Aorta (tissue), 5 donors: ENCODE measurements at regions of chr16 and their contacts with region 1.

Region 1: GRCh38 chr16:29915590-29916247 is 10.3 kb downstream of the KCTD13 start:
- DNase-seq: no peak
- ATAC-seq: no peak
- H3K4me3 ChIP-seq: no peak overlapping the region
- H3K27ac ChIP-seq: no peak overlapping the region
- H3K4me1 ChIP-seq: no peaks in the 10 kb centered on the region
- H3K27me3 ChIP-seq: no peaks in the 10 kb centered on the region

Region 2: GRCh38 chr16:29757950-29758466 is 157.7 kb before region 1 on chr16:
- intact Hi-C with region 1: no loop called
- DNase-seq: peak in 1 of 2 donors; percentile 58
- ATAC-seq: peak; percentile 57
- H3K4me3 ChIP-seq: no peak overlapping the region
- H3K27ac ChIP-seq: no peak overlapping the region
- H3K4me1 ChIP-seq: no peaks in the 10 kb centered on the region
- H3K27me3 ChIP-seq: no peaks in the 10 kb centered on the region

Region 3: GRCh38 chr16:29820271-29820701 is 95.4 kb before region 1 on chr16 and contains the start of gene MVP:
- intact Hi-C with region 1: no loop called
- DNase-seq: peak; percentile 84 to 87
- ATAC-seq: peak; percentile 62
- H3K4me3 ChIP-seq: peak within 1 kb of the TSS; percentile 79 to 89
- H3K27ac ChIP-seq: peak within 1 kb of the TSS; percentile 68 to 86
- H3K4me1 ChIP-seq: peaks cover 0 to 3% of the 10 kb centered on the region in 2 donors
- H3K27me3 ChIP-seq: no peaks in the 10 kb centered on the region
- total RNA-seq, gene MVP: 138 to 184 TPM

Region 4: DNA sequence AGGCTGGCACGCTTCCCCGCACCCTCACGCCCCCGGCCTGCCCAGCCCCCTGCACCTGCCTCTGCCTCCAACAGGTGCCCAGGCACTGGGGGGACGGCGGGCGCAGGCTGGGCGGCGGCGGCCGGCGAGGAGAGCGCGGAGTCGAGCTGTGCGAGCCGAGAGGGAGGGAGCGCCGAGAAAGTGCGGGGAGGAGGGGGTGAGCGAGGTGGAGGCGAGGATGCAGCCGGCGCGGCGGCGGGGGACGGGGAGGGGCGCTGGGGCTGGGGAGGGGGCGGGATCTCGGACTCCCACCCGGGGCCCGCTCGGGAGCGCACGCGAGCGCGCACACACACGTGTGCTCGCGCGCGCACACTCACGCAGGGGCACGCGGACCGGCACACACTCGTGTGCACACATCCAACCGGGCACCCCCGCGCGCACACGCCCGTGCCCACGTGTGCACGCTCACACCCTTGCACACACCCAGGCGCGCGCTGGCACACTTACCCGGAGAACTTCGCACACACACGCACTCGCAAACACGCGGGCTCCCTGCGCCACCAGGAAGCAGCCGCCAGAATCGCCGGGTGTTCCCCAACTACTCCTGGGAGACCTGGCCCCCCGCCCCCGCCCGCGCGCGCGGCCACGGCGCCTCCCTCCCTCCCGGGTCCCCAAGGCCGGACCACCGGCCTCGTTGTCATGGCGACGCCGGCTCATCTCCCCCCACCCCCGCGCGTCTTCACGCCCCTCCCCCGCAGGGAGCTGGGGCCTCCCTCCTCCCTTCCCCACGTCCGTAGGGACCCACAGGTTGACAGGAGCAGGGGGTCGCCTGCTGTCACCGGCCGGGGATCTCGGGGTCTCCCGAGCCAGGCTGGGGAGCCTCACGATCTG is 95.4 kb after region 1 on chr16 and contains the start of gene DOC2A:
- intact Hi-C with region 1: loop called in 1 of 2 experiments (anchors 5 kb)
- DNase-seq: no peak
- ATAC-seq: peak; percentile 17
- H3K4me3 ChIP-seq: peak within 1 kb of the TSS in 1 of 2 donors; percentile 16
- H3K27ac ChIP-seq: no peak within 1 kb of the TSS
- H3K4me1 ChIP-seq: no peaks in the 10 kb centered on the region
- H3K27me3 ChIP-seq: no peaks in the 10 kb centered on the region
- total RNA-seq, gene DOC2A: 0.23 to 1.8 TPM